GM23248 (cell line): ENCODE measurements at regions of chr16 and their contacts with region 1.

Region 1: GRCh38 chr16:86563489-86564345 is 2.9 kb upstream of the FOXC2 start:
- DNase-seq: peak; percentile 93
- H3K4me3 ChIP-seq: peak overlapping the region; percentile 70
- H3K27ac ChIP-seq: 0 out of 2 replicates have a peak overlapping the region, but pooled peaks have one; percentile 0
- H3K4me1 ChIP-seq: 0 out of 2 replicates have a peak, but pooled peaks cover 4% of the 10 kb centered on the region
- H3K27me3 ChIP-seq: peaks cover 20% of the 10 kb centered on the region

Region 2: DNA sequence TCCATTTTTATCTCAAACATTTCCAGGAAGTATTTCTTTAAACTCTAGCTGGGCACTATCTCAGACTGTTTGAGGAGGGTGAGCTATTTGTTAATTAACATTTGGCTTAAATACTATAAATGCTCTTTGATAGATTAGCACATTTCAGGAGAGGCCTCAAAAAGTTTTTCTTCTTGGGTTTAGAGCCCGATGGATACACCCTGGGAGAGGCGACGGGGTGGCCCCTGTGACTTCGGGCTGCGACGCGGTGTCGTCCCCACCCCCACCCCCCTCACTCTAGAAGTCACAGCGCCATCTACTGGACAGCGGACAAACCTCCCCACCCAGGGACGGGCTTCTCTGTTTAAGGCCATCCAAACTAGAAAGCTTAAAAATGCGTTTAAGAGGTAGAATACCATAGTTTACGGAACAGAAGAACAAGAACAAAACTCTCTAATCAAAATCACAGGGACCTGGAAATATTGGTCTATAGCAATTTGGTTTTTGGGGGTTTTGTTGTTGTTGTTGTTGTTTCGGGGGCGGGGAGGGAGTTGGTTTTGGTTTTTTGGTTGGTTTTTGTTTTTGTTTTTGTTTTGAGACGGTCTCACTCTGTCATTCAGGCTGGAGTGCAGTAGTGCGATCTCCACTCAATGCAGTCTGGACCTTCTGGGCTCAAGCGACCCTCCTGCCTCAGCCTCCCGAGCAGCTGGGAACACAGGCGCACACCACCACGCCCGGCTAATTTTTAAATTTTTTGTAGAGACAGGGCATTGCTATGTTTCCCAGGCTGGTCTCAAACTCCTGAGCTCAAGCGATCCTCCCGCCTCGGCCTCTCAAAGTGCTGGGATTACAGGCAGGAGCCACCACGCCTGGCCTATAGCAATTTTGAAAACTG is 499.1 kb after region 1 on chr16:
- in situ Hi-C with region 1: loop called (anchors 5 kb)
- DNase-seq: peak; percentile 82
- H3K4me3 ChIP-seq: peak overlapping the region; percentile 59
- H3K27ac ChIP-seq: no peak overlapping the region
- H3K4me1 ChIP-seq: no peaks in the 10 kb centered on the region
- H3K27me3 ChIP-seq: peaks cover 19% of the 10 kb centered on the region

Region 3: DNA sequence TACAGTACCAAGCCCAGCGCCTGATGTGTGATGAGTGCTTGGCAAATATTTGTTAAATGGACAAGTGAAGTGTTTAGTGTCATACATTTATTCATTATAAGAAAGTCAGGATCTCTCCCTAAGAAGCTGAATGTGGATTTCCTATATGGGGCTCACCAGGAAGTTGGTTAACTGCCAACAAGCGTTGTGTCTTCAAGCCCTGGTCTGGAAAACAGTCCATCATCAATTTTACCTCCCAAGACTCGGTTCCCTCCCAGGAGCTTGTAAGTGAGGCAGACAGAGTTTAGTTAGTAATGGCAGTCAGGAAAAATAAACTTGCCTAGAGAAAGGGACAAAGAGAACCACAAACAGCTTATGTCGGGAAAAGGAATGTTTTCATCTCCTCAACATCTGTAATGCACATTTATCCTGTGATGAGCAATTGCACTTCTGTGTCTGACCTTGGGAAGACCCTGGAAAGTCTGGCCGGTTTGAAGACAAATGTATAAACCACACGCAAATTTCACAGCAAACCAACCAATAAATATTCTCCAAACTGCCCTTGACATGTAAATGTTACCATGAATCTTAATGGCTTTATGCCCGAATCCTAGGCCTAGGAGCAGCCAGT is 725.1 kb after region 1 on chr16:
- in situ Hi-C with region 1: loop called (anchors 5 kb)
- DNase-seq: peak; percentile 8
- H3K4me3 ChIP-seq: no peak overlapping the region
- H3K27ac ChIP-seq: no peak overlapping the region
- H3K4me1 ChIP-seq: no peaks in the 10 kb centered on the region
- H3K27me3 ChIP-seq: no peaks in the 10 kb centered on the region